GM12878 (cell line): ENCODE measurements at regions of chr17 and their contacts with region 1.

Region 1: DNA sequence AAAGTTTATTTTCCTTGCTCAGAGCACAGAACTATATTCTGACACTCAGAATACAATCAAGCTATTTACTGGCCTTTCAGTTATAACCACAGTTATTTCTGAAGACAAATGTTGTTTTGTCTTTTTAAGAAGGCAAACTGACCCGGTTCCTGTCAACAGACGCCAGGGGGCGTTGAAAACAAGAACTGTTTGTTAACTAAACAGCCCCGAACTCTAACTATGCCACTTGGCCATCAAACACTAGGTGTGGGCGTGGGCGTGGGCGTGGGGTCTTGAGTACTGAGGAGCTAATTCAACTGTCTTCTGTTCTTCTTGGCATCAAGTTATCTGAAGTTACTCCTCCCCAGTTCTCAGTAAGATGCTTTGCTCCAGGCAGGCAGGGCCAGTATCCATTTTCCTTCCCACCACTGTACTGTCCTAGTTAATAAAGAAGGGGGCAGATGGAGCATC is 63.2 kb upstream of the MTMR4 start:
- DNase-seq: no peak
- ATAC-seq: peak; percentile 82
- H3K4me3 ChIP-seq: no peak overlapping the region
- H3K27ac ChIP-seq: no peak overlapping the region
- H3K4me1 ChIP-seq: peaks cover 11% of the 10 kb centered on the region
- H3K27me3 ChIP-seq: no peaks in the 10 kb centered on the region
- CTCF ChIP-seq: peak; percentile 63 to 84 (median 77)
- EP300 ChIP-seq: no peak
- POLR2A ChIP-seq: no peak
- RAD21 ChIP-seq: peak; percentile 52

Region 2: DNA sequence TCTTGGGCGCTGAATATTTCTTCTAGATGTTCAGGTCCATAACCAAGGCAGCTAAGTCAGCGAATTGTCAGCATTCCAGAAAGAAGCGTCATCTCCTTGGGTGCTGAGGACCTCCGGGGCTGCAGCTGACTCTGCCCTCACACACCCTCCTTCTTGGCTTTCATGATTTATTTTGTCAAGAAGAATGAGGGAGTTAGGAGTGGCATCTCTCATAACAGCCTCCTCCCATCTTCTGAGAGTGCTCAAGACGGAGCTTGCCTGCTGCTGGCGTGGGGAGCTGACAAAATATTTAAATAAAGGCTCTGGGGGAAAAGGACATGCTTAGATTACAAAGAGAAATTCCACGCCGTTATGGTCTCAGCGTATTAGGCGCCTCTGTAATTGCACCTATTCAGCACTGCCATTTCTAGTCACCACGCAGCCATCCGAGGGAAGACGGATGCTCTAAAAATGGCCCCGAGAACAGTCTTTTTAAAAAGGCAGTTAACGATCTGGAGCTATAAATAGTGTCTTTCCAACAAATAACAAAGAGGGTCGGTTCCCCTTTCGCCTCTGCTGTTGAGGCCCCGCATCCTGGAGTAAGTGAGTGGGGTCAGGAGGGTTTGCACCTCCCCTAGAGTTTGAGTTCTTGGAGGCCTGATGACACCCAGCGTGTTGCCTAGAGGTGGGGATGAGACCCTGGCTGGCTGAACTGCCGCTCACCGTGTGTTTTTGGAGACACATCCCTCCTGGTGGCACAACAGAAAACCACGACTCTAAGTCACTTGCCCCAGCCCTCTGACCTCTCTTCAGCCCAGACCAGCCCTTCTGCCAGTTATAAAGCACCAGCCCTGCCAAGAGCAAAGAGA is 1019.6 kb before region 1 on chr17:
- CTCF ChIA-PET with region 1: no interaction called
- POLR2A ChIA-PET with region 1: no interaction called
- RAD21 ChIA-PET with region 1: no interaction called
- SMC1A ChIA-PET with region 1: no interaction called
- in situ Hi-C with region 1: no loop called
- intact Hi-C with region 1: no loop called
- DNase-seq: no peak
- ATAC-seq: no peak
- H3K4me3 ChIP-seq: no peak overlapping the region
- H3K27ac ChIP-seq: peak overlapping the region; percentile 36
- H3K4me1 ChIP-seq: peaks cover 13% of the 10 kb centered on the region
- H3K27me3 ChIP-seq: no peaks in the 10 kb centered on the region
- CTCF ChIP-seq: no peak
- EP300 ChIP-seq: no peak
- POLR2A ChIP-seq: no peak
- RAD21 ChIP-seq: no peak

Region 3: GRCh38 chr17:58468944-58469343 is 108.7 kb before region 1 on chr17:
- CTCF ChIA-PET with region 1: no interaction called
- POLR2A ChIA-PET with region 1: no interaction called
- RAD21 ChIA-PET with region 1: no interaction called
- SMC1A ChIA-PET with region 1: no interaction called
- in situ Hi-C with region 1: no loop called
- intact Hi-C with region 1: no loop called
- DNase-seq: no peak
- ATAC-seq: no peak
- H3K4me3 ChIP-seq: no peak overlapping the region
- H3K27ac ChIP-seq: no peak overlapping the region
- H3K4me1 ChIP-seq: no peaks in the 10 kb centered on the region
- H3K27me3 ChIP-seq: no peaks in the 10 kb centered on the region
- CTCF ChIP-seq: no peak
- EP300 ChIP-seq: no peak
- POLR2A ChIP-seq: no peak
- RAD21 ChIP-seq: no peak

Region 4: GRCh38 chr17:58494825-58495535 is 82.7 kb before region 1 on chr17:
- CTCF ChIA-PET with region 1: no interaction called
- POLR2A ChIA-PET with region 1: no interaction called
- RAD21 ChIA-PET with region 1: no interaction called
- SMC1A ChIA-PET with region 1: no interaction called
- in situ Hi-C with region 1: no loop called
- intact Hi-C with region 1: no loop called
- DNase-seq: no peak
- ATAC-seq: no peak
- H3K4me3 ChIP-seq: no peak overlapping the region
- H3K27ac ChIP-seq: no peak overlapping the region
- H3K4me1 ChIP-seq: no peaks in the 10 kb centered on the region
- H3K27me3 ChIP-seq: no peaks in the 10 kb centered on the region; a peak in 1 of 4 replicates
- CTCF ChIP-seq: no peak
- EP300 ChIP-seq: no peak
- POLR2A ChIP-seq: no peak
- RAD21 ChIP-seq: no peak

Region 5: DNA sequence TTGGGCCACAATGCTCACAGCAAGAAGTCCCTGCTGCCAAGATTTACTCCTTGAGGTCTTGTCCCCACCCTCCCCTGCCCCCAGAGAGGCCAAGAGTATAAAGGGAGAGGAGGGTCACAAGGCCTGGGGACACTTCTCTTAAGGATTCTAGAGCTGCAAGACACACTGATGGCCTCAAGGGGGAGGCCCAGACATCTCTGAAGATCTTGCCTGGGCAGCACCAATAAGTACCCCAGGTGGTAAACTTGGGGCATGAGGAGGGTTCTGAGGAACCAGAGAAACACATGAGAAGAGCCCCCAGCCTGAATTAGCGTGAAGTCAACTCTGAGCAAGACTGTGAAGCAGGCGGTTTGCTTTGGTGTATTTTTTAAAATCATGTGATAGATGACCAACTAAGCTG is 36.4 kb before region 1 on chr17:
- CTCF ChIA-PET with region 1: interaction called, 45 read pairs
- POLR2A ChIA-PET with region 1: interaction called, 8 read pairs
- RAD21 ChIA-PET with region 1: interaction called, 9 read pairs
- SMC1A ChIA-PET with region 1: interaction called, 6 read pairs
- in situ Hi-C with region 1: no loop called
- intact Hi-C with region 1: no loop called
- DNase-seq: no peak
- ATAC-seq: peak; percentile 88
- H3K4me3 ChIP-seq: no peak overlapping the region
- H3K27ac ChIP-seq: no peak overlapping the region
- H3K4me1 ChIP-seq: no peaks in the 10 kb centered on the region
- H3K27me3 ChIP-seq: no peaks in the 10 kb centered on the region; a peak in 1 of 4 replicates
- CTCF ChIP-seq: peak; percentile 41 to 59 (median 47)
- EP300 ChIP-seq: no peak
- POLR2A ChIP-seq: no peak
- RAD21 ChIP-seq: peak; percentile 49

Region 6: DNA sequence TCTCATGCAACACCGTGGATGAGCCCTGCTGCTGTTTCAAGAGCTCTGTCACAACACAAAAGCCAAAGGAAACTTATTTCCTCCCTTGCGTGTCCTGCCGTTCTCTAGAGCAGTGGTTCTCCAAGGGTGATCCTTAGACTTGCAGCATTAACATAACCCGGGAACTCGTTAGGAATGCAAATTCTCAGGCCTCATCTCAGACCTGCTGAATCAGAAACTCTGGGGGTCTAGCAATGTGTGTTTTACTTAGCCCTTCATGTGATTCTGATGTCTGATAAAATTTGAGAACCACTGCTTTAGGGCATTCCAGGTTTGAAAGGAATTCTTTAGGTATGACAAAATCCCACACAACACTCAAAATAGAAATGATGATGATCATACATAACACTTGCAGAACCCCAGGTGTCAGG is 11.9 kb before region 1 on chr17:
- CTCF ChIA-PET with region 1: interaction called, 22 read pairs
- POLR2A ChIA-PET with region 1: interaction called, 4 read pairs
- RAD21 ChIA-PET with region 1: interaction called, 3 read pairs
- SMC1A ChIA-PET with region 1: interaction called, 7 read pairs
- in situ Hi-C with region 1: no loop called
- intact Hi-C with region 1: no loop called
- DNase-seq: no peak
- ATAC-seq: no peak
- H3K4me3 ChIP-seq: no peak overlapping the region
- H3K27ac ChIP-seq: no peak overlapping the region
- H3K4me1 ChIP-seq: peaks cover 5% of the 10 kb centered on the region
- H3K27me3 ChIP-seq: no peaks in the 10 kb centered on the region
- CTCF ChIP-seq: no peak
- EP300 ChIP-seq: no peak
- POLR2A ChIP-seq: no peak
- RAD21 ChIP-seq: no peak

Region 7: GRCh38 chr17:58595326-58595725 is 17.7 kb after region 1 on chr17:
- CTCF ChIA-PET with region 1: interaction called, 12 read pairs
- POLR2A ChIA-PET with region 1: no interaction called
- RAD21 ChIA-PET with region 1: interaction called, 3 read pairs
- SMC1A ChIA-PET with region 1: interaction called, 6 read pairs
- in situ Hi-C with region 1: no loop called
- intact Hi-C with region 1: no loop called
- DNase-seq: no peak
- ATAC-seq: peak; percentile 74
- H3K4me3 ChIP-seq: no peak overlapping the region
- H3K27ac ChIP-seq: no peak overlapping the region
- H3K4me1 ChIP-seq: no peaks in the 10 kb centered on the region
- H3K27me3 ChIP-seq: no peaks in the 10 kb centered on the region
- CTCF ChIP-seq: peak in 2 of 3 experiments; percentile 9 to 33; a peak in 3 of 6 replicates
- EP300 ChIP-seq: no peak
- POLR2A ChIP-seq: no peak
- RAD21 ChIP-seq: peak; percentile 51